ENCODE measurements at regions of chr7 and their contacts with region 1.

Region 1: GRCh38 chr7:128883622-128884501 is 21.2 kb downstream of the ATP6V1F start:
- DNase-seq: peak; percentile 82 to 87
- ATAC-seq: peak; percentile 52 to 79 (median 60)
- H3K4me3 ChIP-seq: peak overlapping the region in 1 of 10 donors; percentile 33
- H3K27ac ChIP-seq: no peak overlapping the region
- H3K4me1 ChIP-seq: peaks cover 0 to 15% (median 0%) of the 10 kb centered on the region in 9 donors
- H3K27me3 ChIP-seq: peaks cover 0 to 3% (median 0%) of the 10 kb centered on the region in 7 donors
- CTCF ChIP-seq: peak; percentile 86 to 97 (median 95)

Region 2: GRCh38 chr7:128666200-128666599 is 217.7 kb before region 1 on chr7:
- intact Hi-C with region 1: loop called in 1 of 10 experiments (anchors 10 kb)
- DNase-seq: no peak
- ATAC-seq: no peak
- H3K4me3 ChIP-seq: no peak overlapping the region
- H3K27ac ChIP-seq: no peak overlapping the region
- H3K4me1 ChIP-seq: no peaks in the 10 kb centered on the region
- H3K27me3 ChIP-seq: no peaks in the 10 kb centered on the region
- CTCF ChIP-seq: peak in 2 of 9 donors; percentile 26

Region 3: GRCh38 chr7:128739048-128739962 is 144.6 kb before region 1 on chr7 and contains the start of gene CALU:
- intact Hi-C with region 1: loop called in 1 of 10 experiments (anchors 10 kb)
- DNase-seq: peak; percentile 96 to 97
- ATAC-seq: peak; percentile 97 to 99 (median 98)
- H3K4me3 ChIP-seq: peak within 1 kb of the TSS; percentile 69 to 99 (median 93)
- H3K27ac ChIP-seq: peak within 1 kb of the TSS; percentile 49 to 97 (median 94)
- H3K4me1 ChIP-seq: peaks cover 3 to 62% (median 47%) of the 10 kb centered on the region in 9 donors
- H3K27me3 ChIP-seq: no peaks in the 10 kb centered on the region
- CTCF ChIP-seq: no peak
- total RNA-seq, gene CALU: 197 to 333 (median 249) TPM

Region 4: GRCh38 chr7:128791121-128791961 is 92.5 kb before region 1 on chr7:
- intact Hi-C with region 1: loop called in 1 of 10 experiments (anchors 10 kb)
- DNase-seq: peak; percentile 67 to 81
- ATAC-seq: peak; percentile 70 to 88 (median 83)
- H3K4me3 ChIP-seq: peak overlapping the region; percentile 64 to 97 (median 85)
- H3K27ac ChIP-seq: peak overlapping the region in 7 of 10 donors; percentile 23 to 77 (median 49)
- H3K4me1 ChIP-seq: peaks cover 8 to 29% (median 25%) of the 10 kb centered on the region in 9 donors
- H3K27me3 ChIP-seq: peaks cover 0 to 21% (median 0%) of the 10 kb centered on the region in 7 donors
- CTCF ChIP-seq: no peak

Region 5: DNA sequence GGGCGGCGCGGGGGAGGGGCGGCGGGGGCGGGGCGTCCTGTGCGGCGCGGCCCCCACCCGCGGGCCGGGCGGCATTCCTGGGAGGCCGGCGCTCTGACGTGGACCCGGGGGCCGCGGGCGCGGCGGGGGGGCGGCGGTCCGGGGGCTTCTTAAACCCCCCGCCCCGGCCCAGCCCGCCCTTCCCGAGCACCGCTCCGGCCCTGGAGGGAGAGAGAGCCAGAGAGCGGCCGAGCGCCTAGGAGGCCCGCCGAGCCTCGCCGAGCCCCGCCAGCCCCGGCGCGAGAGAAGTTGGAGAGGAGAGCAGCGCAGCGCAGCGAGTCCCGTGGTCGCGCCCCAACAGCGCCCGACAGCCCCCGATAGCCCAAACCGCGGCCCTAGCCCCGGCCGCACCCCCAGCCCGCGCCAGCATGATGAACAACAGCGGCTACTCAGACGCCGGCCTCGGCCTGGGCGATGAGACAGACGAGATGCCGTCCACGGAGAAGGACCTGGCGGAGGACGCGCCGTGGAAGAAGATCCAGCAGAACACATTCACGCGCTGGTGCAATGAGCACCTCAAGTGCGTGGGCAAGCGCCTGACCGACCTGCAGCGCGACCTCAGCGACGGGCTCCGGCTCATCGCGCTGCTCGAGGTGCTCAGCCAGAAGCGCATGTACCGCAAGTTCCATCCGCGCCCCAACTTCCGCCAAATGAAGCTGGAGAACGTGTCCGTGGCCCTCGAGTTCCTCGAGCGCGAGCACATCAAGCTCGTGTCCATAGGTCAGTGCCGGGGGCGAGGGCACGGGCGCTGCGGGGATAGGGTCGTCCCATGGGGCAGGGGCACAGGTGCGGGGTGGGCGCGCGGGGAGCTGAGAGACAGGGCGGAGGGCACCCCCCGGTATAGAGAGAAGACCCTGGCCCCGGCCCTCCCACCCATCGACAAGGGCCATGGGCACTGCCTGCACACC is 53.4 kb before region 1 on chr7 and contains the start of gene FLNC:
- intact Hi-C with region 1: no loop called
- DNase-seq: peak; percentile 63 to 70
- ATAC-seq: peak; percentile 0 to 25 (median 8)
- H3K4me3 ChIP-seq: peak within 1 kb of the TSS; percentile 55 to 92 (median 72)
- H3K27ac ChIP-seq: peak within 1 kb of the TSS; percentile 86 to 99 (median 94)
- H3K4me1 ChIP-seq: peaks cover 20 to 79% (median 50%) of the 10 kb centered on the region in 9 donors
- H3K27me3 ChIP-seq: peaks cover 0 to 46% (median 0%) of the 10 kb centered on the region in 7 donors
- CTCF ChIP-seq: no peak
- total RNA-seq, gene FLNC: 364 to 2,445 (median 1,303) TPM

Region 6: DNA sequence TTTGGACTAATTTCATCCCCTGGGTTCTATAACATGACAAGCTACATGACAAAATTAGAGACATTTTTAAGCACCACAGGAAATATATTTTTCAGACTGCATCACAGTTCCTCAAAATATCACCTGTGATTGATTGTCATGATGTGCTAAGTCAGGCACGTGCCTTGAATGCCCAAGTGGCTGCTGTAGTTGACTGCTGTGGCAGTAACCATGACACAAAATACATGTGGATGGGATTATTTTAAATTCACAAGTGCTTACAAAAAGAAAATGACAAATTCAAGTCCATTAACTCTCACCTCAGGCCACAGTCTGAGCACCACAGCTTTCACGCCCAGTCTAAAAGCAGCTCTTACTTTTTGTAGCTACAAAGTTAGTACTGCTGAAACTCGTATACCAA is 125.6 kb after region 1 on chr7:
- intact Hi-C with region 1: no loop called
- DNase-seq: no peak
- ATAC-seq: no peak
- H3K4me3 ChIP-seq: no peak overlapping the region
- H3K27ac ChIP-seq: no peak overlapping the region
- H3K4me1 ChIP-seq: peaks cover 0 to 22% (median 5%) of the 10 kb centered on the region in 9 donors
- H3K27me3 ChIP-seq: no peaks in the 10 kb centered on the region
- CTCF ChIP-seq: no peak